OCI-LY7 (cell line): ENCODE measurements at regions of chr18 and their contacts with region 1.

Region 1: GRCh38 chr18:44758861-44759631 is 78.4 kb downstream of the SETBP1 start:
- DNase-seq: peak; percentile 89
- H3K4me3 ChIP-seq: peak overlapping the region; percentile 49
- H3K27ac ChIP-seq: peak overlapping the region; percentile 100
- H3K4me1 ChIP-seq: peaks cover 48% of the 10 kb centered on the region
- CTCF ChIP-seq: no peak

Region 2: DNA sequence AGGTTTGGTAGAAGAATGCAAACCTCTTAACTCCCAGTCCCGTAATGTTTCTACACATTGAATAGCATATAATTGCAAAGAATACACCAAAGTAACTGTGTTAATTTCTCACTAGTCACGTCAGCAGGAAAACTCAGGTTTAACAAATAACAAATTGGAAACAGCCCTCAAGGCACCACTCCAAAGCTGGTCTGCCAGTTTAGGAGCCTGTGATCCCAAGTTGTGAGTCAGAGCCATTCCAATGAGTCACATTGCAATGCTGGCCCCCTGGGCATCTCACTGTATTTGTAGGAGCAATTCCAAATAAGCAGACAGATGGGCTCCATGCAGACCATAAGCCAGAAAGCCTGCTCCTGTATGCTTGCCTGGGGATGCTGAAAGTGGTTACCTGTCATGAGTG is 221.5 kb before region 1 on chr18:
- CTCF ChIA-PET with region 1: no interaction called
- POLR2A ChIA-PET with region 1: no interaction called
- intact Hi-C with region 1: no loop called
- DNase-seq: no peak
- H3K4me3 ChIP-seq: no peak overlapping the region
- H3K27ac ChIP-seq: no peak overlapping the region
- H3K4me1 ChIP-seq: no peaks in the 10 kb centered on the region
- CTCF ChIP-seq: no peak

Region 3: GRCh38 chr18:44556296-44556695 is 202.8 kb before region 1 on chr18:
- CTCF ChIA-PET with region 1: no interaction called
- POLR2A ChIA-PET with region 1: no interaction called
- intact Hi-C with region 1: no loop called
- DNase-seq: no peak
- H3K4me3 ChIP-seq: no peak overlapping the region
- H3K27ac ChIP-seq: no peak overlapping the region
- H3K4me1 ChIP-seq: no peaks in the 10 kb centered on the region
- CTCF ChIP-seq: no peak

Region 4: DNA sequence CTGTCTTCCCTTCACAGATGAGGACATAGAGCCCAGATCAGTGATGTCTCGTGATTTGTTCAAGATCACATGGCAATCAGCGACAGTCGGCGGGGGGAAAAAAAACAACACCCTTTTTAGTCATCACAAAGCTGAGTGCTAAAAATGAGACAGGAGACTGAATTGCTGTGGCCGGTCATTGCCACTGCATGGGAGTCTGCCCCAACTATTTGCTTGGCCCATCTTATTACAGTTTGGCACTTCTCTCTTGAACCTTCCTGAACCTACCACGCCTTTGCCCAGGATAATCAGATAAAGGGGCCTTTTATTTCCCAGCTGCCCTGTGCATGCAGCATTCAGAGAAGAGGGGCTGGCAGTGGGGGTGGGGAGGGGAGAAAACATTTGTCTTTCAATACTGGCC is 35.6 kb before region 1 on chr18:
- CTCF ChIA-PET with region 1: no interaction called
- POLR2A ChIA-PET with region 1: interaction called, 3 read pairs
- intact Hi-C with region 1: loop called (anchors 2 kb)
- DNase-seq: peak; percentile 16
- H3K4me3 ChIP-seq: peak overlapping the region; percentile 13
- H3K27ac ChIP-seq: no peak overlapping the region
- H3K4me1 ChIP-seq: peaks cover 54% of the 10 kb centered on the region
- CTCF ChIP-seq: no peak

Region 5: DNA sequence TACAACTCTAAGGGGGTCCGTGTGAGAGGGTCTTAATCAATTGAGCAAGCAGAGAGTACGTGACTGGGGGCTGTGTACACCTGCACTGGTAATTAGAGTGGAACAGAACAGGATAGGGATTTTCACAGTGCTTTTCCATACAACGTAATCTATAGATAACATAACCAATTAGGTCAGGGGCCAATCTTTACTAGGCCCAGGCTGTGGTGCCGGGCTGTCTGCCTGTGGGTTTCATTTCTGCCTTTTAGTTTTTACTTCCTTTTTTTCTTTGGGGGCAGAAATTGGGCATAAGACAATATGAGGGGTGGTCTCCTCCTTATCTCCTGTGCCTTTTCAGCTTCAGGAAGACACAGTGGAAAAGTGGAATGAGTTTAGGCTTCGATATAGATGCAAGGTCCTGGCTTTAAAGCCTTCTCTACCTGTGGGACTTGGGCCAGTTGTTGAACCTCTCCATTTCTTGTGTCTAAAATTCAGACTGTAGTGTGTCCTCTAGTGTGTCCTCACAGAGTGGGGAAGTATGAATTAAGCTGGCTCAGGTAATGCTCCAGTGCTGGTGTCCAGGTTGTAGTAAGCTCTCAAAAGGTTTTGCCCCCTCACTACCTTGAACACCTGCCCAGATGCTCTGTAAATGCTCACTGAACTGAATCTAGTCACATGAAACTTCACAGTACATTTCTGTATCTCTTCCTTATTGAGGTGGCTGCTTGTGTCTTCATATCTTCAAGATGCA is 344.4 kb after region 1 on chr18:
- CTCF ChIA-PET with region 1: no interaction called
- POLR2A ChIA-PET with region 1: interaction called, 5 read pairs
- intact Hi-C with region 1: loop called (anchors 1 kb)
- DNase-seq: peak; percentile 71
- H3K4me3 ChIP-seq: peak overlapping the region; percentile 44
- H3K27ac ChIP-seq: peak overlapping the region; percentile 93
- H3K4me1 ChIP-seq: peaks cover 66% of the 10 kb centered on the region
- CTCF ChIP-seq: no peak